ENCODE measurements at regions of chr20 and their contacts with region 1.

Region 1: GRCh38 chr20:19889011-19889953 is 127.9 kb upstream of the NAA20 start:
- DNase-seq: no peak
- H3K4me3 ChIP-seq: no peak overlapping the region
- H3K27ac ChIP-seq: no peak overlapping the region
- H3K4me1 ChIP-seq: peaks cover 25% of the 10 kb centered on the region
- H3K27me3 ChIP-seq: no peaks in the 10 kb centered on the region
- CTCF ChIP-seq: no peak

Region 2: GRCh38 chr20:19735446-19735845 is 153.8 kb before region 1 on chr20:
- CTCF ChIA-PET with region 1: no interaction called
- POLR2A ChIA-PET with region 1: no interaction called
- intact Hi-C with region 1: no loop called
- DNase-seq: peak; percentile 79 to 90
- H3K4me3 ChIP-seq: no peak overlapping the region
- H3K27ac ChIP-seq: peak overlapping the region; percentile 100
- H3K4me1 ChIP-seq: peaks cover 49% of the 10 kb centered on the region
- H3K27me3 ChIP-seq: no peaks in the 10 kb centered on the region
- CTCF ChIP-seq: no peak

Region 3: GRCh38 chr20:19784511-19785172 is 104.6 kb before region 1 on chr20:
- CTCF ChIA-PET with region 1: interaction called, 17 read pairs
- POLR2A ChIA-PET with region 1: no interaction called
- intact Hi-C with region 1: loop called (anchors 1 kb)
- DNase-seq: peak; percentile 90 to 92
- H3K4me3 ChIP-seq: peak overlapping the region; percentile 29; the same call in 1 of the 2 replicates
- H3K27ac ChIP-seq: peak overlapping the region; percentile 91
- H3K4me1 ChIP-seq: peaks cover 44% of the 10 kb centered on the region
- H3K27me3 ChIP-seq: no peaks in the 10 kb centered on the region
- CTCF ChIP-seq: peak; percentile 93

Region 4: GRCh38 chr20:19913927-19914614 is 24.8 kb after region 1 on chr20:
- CTCF ChIA-PET with region 1: no interaction called
- POLR2A ChIA-PET with region 1: interaction called, 15 read pairs
- intact Hi-C with region 1: no loop called
- DNase-seq: peak; percentile 21 to 73
- H3K4me3 ChIP-seq: no peak overlapping the region
- H3K27ac ChIP-seq: no peak overlapping the region
- H3K4me1 ChIP-seq: peaks cover 12% of the 10 kb centered on the region
- H3K27me3 ChIP-seq: no peaks in the 10 kb centered on the region
- CTCF ChIP-seq: no peak

Region 5: DNA sequence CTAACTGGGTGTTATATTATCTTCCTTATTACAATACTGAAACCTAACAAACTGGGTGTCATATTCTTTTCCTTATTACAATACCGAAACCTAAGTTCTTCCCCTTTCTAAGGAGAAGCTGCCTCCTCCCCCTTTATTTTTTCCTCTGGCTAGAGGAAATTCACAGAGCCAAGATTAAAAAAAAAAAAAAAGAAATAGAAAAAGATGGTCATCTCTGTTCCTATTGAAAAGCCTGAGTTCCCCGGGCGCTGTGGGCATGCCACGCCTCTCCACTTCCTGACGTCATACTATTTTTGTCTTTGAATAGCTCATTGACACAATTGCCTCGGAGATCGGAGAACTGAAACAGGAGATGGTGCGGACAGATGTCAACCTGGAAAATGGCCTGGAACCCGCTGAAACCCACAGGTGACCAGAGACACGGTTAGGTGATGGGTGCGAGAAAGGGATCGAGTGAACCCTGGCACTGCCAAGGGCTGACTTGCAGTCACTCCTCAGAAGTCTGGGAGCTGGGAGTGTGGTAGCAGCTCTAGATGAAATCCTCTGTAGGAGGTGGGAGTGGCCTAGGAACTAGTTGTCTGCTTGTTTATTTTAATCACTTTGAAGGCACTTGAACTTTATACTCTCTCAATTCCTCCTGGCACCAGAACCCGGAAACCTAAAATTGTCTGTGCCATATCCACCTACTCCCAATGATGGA is 45.7 kb after region 1 on chr20:
- CTCF ChIA-PET with region 1: no interaction called
- POLR2A ChIA-PET with region 1: interaction called, 18 read pairs
- intact Hi-C with region 1: loop called (anchors 2 kb)
- DNase-seq: peak; percentile 62 to 73
- H3K4me3 ChIP-seq: peak overlapping the region; percentile 48; the same call in 1 of the 2 replicates
- H3K27ac ChIP-seq: peak overlapping the region; percentile 86
- H3K4me1 ChIP-seq: peaks cover 32% of the 10 kb centered on the region
- H3K27me3 ChIP-seq: no peaks in the 10 kb centered on the region
- CTCF ChIP-seq: no peak

Region 6: GRCh38 chr20:20017001-20017843 is 127.9 kb after region 1 on chr20 and contains the start of gene NAA20:
- CTCF ChIA-PET with region 1: no interaction called
- POLR2A ChIA-PET with region 1: no interaction called
- intact Hi-C with region 1: loop called (anchors 1 kb)
- DNase-seq: peak; percentile 85 to 96
- H3K4me3 ChIP-seq: peak within 1 kb of the TSS; percentile 99
- H3K27ac ChIP-seq: peak within 1 kb of the TSS; percentile 74
- H3K4me1 ChIP-seq: peaks cover 26% of the 10 kb centered on the region
- H3K27me3 ChIP-seq: no peaks in the 10 kb centered on the region
- CTCF ChIP-seq: peak; percentile 51; the same call in 1 of the 2 replicates
- total RNA-seq, gene NAA20: 167 and 168 TPM in 2 replicates

Region 7: DNA sequence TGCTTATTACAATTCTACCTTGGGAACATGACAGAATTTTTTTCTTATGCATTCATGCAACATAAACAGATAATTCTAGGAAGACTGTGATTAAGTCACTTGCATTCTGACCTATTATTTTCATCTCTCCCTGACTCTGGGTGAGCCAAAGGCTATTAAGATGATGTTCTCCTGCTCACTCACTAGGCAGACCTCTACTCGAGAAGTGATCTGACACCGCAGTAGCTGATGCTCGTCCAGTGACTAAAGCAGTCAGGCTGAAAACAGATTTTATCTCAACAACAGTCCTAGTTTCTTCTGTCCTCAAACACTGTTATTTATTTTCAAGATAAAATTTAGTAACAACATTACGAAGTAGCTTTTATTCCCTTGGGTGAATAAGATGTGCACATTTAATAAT is 145.2 kb after region 1 on chr20:
- CTCF ChIA-PET with region 1: no interaction called
- POLR2A ChIA-PET with region 1: no interaction called
- intact Hi-C with region 1: no loop called
- DNase-seq: no peak
- H3K4me3 ChIP-seq: no peak overlapping the region
- H3K27ac ChIP-seq: no peak overlapping the region
- H3K4me1 ChIP-seq: no peaks in the 10 kb centered on the region
- H3K27me3 ChIP-seq: no peaks in the 10 kb centered on the region
- CTCF ChIP-seq: no peak